RWPE1 (cell line): ENCODE measurements at regions of chr9 and their contacts with region 1.

Region 1: GRCh38 chr9:38079461-38080031 is 10.5 kb upstream of the SHB start:
- DNase-seq: no peak
- H3K27ac ChIP-seq: no peak overlapping the region
- CTCF ChIP-seq: no peak

Region 2: DNA sequence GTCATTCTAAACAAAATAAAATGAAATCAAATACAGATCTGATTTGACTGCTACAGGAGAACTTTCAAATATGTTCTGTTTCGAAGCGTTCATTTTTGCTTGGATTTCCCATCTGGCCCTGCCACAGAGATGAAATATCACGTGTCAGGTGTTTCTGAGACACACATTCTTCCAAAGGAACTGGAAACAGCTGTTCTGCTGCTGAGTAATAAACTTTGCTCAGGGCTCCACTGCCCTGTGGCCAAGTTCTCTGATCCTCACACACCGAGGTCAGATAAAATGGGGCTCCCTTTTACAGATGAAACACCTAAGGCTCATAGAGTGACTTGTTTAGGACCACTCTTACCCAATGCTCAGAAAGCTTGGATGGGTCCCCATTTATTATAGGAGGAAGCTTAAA is 386.3 kb before region 1 on chr9:
- CTCF ChIA-PET with region 1: no interaction called
- POLR2A ChIA-PET with region 1: no interaction called
- DNase-seq: no peak
- H3K27ac ChIP-seq: no peak overlapping the region
- CTCF ChIP-seq: no peak

Region 3: DNA sequence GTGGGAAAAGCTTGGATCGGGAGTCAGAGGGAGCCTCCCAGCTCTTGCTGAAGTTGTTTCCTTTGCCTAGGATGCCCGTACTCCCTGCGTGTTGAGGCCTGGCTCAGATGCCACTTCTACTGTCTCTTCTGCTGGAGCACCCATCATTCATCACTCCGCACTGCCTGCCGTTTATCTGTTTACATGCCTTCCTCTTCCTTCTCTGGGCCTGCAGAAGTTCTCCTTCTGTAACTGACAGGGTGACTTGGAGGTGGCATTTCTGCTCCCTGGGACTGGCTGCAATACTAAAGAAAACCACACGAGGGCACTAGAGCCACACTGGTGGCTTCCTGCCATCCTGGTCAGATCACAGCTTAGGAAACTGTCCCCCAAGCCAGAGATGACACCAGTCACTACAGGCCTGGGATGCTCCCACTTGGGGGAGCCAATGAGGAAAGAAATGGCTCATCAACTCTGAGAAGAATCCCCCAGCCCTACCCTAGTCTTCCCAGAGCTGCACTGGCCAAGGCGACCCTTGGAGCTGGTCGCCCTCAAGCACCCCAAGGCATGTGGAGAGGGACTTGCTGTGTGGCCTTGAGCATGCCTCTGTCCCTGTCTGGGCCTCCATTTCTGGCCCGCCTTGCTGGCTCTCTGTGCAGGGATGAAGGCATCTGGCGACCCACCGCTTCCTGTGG is 165.9 kb before region 1 on chr9:
- CTCF ChIA-PET with region 1: interaction called, 10 read pairs
- POLR2A ChIA-PET with region 1: no interaction called
- DNase-seq: peak; percentile 74
- H3K27ac ChIP-seq: peak overlapping the region; percentile 84
- CTCF ChIP-seq: peak; percentile 96